Psoas muscle (tissue), 8 donors: ENCODE measurements at regions of chr10 and their contacts with region 1.

Region 1: DNA sequence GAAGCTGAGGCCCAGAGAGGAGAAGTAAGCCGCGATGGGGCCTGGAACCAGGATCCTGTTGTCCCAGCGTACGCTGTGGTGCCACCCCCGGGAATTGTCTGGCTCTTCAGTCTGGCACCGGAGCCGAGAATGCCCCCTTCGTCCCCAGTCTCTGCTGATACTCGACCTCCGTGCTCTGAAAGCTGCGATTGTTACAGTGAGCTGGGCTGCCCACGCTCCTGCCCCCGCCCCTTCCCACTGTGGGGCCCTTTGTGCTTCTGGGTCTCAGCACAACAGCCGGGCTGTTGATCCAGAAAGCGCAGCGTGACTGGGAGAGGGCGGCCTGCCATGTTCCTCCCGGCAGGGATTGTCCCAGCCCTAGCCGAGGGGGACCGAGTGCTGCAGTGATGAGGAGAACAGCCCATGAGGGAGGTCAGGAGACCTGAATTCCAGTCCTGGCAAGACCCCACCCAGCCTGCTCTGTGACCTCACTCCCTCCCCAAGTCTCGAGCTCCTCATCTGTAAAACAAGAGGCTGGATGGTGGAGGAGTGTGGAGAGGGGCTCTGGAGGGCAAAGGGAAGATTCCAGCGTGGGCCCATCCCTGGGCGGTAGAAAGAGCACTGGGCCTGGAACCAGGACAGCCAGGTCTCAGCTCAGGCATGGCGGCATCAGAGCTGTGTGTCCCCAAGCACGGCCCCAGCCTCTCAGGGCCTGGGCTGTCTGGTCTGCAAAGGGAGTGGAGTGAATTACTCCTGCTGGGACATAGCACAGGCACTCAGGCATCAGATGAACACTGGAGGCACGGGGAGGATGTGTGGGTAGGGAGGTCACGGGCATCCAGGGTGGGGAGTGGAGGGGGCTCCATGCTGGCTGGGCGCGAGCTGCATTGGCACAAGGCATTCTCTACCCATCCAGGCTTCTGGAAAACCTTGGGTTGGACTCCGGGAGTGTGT is 43.6 kb downstream of the TSPAN15 start:
- DNase-seq: no peak
- ATAC-seq: no peak
- H3K4me3 ChIP-seq: no peak overlapping the region
- H3K27ac ChIP-seq: peak overlapping the region; percentile 90
- H3K4me1 ChIP-seq: peaks cover 39% of the 10 kb centered on the region
- H3K27me3 ChIP-seq: no peaks in the 10 kb centered on the region
- CTCF ChIP-seq: no peak

Region 2: GRCh38 chr10:69439813-69440506 is 54.9 kb before region 1 on chr10:
- intact Hi-C with region 1: loop called (anchors 5 kb)
- DNase-seq: no peak
- ATAC-seq: peak; percentile 61 to 78 (median 76)
- H3K4me3 ChIP-seq: no peak overlapping the region
- H3K27ac ChIP-seq: peak overlapping the region; percentile 81
- H3K4me1 ChIP-seq: peaks cover 24% of the 10 kb centered on the region
- H3K27me3 ChIP-seq: no peaks in the 10 kb centered on the region
- CTCF ChIP-seq: no peak

Region 3: GRCh38 chr10:69458426-69459108 is 36.3 kb before region 1 on chr10:
- intact Hi-C with region 1: loop called in 1 of 2 experiments (anchors 5 kb)
- DNase-seq: peak; percentile 40 to 70
- ATAC-seq: peak in 3 of 4 donors; percentile 72 to 78 (median 75)
- H3K4me3 ChIP-seq: peak overlapping the region; percentile 32
- H3K27ac ChIP-seq: peak overlapping the region; percentile 91
- H3K4me1 ChIP-seq: peaks cover 84% of the 10 kb centered on the region
- H3K27me3 ChIP-seq: no peaks in the 10 kb centered on the region
- CTCF ChIP-seq: no peak